ENCODE measurements at regions of chr2 and their contacts with region 1.

Region 1: DNA sequence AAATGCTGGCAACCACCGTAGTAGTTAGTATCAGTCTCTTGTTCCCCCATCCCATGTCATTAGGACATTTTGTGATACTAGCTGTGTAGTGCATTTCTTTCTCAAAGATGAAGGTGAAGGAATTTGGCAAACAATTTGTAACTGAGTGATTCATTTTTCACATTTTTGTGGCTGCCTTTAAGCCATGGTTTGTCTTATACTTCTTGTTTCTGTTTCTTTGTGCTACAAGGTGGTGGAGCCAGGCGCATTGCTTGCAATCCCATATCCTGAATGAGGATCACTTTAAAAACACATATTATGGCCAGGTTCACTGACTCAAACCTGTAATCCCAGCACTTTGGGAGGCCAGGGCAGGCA is 40.6 kb downstream of the GPD2 start:
- DNase-seq: no peak
- ATAC-seq: no peak
- H3K4me3 ChIP-seq: no peak overlapping the region
- H3K4me3 Mint-ChIP-seq: peak overlapping the region; percentile 2
- H3K27ac ChIP-seq: no peak overlapping the region
- H3K27ac Mint-ChIP-seq: no peak overlapping the region
- H3K4me1 ChIP-seq: peaks cover 6% of the 10 kb centered on the region
- H3K4me1 Mint-ChIP-seq: peaks cover 41% of the 10 kb centered on the region
- H3K27me3 ChIP-seq: no peaks in the 10 kb centered on the region
- H3K27me3 Mint-ChIP-seq: no peaks in the 10 kb centered on the region
- CTCF ChIP-seq: no peak

Region 2: DNA sequence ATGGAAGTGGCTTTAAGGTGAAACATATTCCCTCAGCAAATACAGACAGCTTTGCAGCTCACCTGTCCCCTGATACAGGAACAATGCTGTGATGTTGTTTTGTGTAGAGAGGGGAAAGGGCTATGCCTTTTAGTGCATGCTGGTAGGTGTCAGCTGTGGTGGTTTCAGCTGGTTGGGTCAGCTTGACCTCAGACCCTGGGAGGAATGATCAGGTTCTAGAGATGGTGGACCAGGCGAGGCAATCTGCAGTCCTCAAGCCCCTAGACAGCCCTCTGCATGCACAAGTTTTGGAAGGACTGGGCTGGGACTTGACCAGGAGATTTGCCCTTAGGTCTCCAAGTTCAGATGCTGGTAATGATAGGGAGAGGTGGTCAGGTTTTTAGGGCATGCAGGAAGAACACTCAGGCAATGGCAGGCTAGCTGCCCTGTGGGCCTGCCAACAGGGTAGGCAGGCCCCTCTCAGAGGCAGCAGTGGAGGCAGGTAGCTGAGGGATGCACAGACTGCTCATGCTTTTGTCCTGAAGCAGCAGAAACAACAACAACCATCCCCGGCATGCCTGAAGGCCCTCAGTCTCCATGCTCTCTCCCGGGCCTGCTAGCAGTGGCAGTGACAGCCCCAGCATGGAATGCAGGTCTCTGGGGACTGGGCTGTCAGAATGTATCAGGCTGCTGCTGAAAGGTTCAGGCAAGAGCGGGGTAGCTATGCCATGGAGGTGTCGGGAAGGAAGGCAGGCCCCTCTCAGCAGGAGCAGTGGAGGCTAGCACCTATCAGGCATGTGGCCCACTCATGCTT is 1568.7 kb before region 1 on chr2:
- CTCF ChIA-PET with region 1: no interaction called
- POLR2A ChIA-PET with region 1: no interaction called
- intact Hi-C with region 1: no loop called
- DNase-seq: no peak
- ATAC-seq: no peak
- H3K4me3 ChIP-seq: no peak overlapping the region
- H3K4me3 Mint-ChIP-seq: no peak overlapping the region
- H3K27ac ChIP-seq: no peak overlapping the region
- H3K27ac Mint-ChIP-seq: no peak overlapping the region
- H3K4me1 ChIP-seq: no peaks in the 10 kb centered on the region
- H3K4me1 Mint-ChIP-seq: no peaks in the 10 kb centered on the region
- H3K27me3 ChIP-seq: no peaks in the 10 kb centered on the region
- H3K27me3 Mint-ChIP-seq: no peaks in the 10 kb centered on the region
- CTCF ChIP-seq: no peak

Region 3: GRCh38 chr2:156456616-156457015 is 20.2 kb before region 1 on chr2:
- CTCF ChIA-PET with region 1: interaction called, 3 read pairs
- POLR2A ChIA-PET with region 1: no interaction called
- intact Hi-C with region 1: loop called in 1 of 2 experiments (anchors 1 kb)
- DNase-seq: no peak
- ATAC-seq: no peak
- H3K4me3 ChIP-seq: no peak overlapping the region
- H3K4me3 Mint-ChIP-seq: no peak overlapping the region
- H3K27ac ChIP-seq: no peak overlapping the region
- H3K27ac Mint-ChIP-seq: no peak overlapping the region
- H3K4me1 ChIP-seq: no peaks in the 10 kb centered on the region
- H3K4me1 Mint-ChIP-seq: peaks cover 30% of the 10 kb centered on the region
- H3K27me3 ChIP-seq: no peaks in the 10 kb centered on the region
- H3K27me3 Mint-ChIP-seq: no peaks in the 10 kb centered on the region
- CTCF ChIP-seq: no peak

Measured in CD8-positive, alpha-beta T cell (primary cell).